ENCODE measurements at regions of chr19 and their contacts with region 1.

Region 1: GRCh38 chr19:6372594-6373095 is at the start of gene ALKBH7:
- DNase-seq: peak; percentile 99
- H3K4me3 Mint-ChIP-seq: peak within 1 kb of the TSS; percentile 92
- H3K27ac Mint-ChIP-seq: peak within 1 kb of the TSS; percentile 94
- H3K4me1 Mint-ChIP-seq: peaks cover 11% of the 10 kb centered on the region
- H3K27me3 Mint-ChIP-seq: no peaks in the 10 kb centered on the region
- total RNA-seq, gene ALKBH7: 23.9 and 25.0 TPM in 2 replicates

Region 2: DNA sequence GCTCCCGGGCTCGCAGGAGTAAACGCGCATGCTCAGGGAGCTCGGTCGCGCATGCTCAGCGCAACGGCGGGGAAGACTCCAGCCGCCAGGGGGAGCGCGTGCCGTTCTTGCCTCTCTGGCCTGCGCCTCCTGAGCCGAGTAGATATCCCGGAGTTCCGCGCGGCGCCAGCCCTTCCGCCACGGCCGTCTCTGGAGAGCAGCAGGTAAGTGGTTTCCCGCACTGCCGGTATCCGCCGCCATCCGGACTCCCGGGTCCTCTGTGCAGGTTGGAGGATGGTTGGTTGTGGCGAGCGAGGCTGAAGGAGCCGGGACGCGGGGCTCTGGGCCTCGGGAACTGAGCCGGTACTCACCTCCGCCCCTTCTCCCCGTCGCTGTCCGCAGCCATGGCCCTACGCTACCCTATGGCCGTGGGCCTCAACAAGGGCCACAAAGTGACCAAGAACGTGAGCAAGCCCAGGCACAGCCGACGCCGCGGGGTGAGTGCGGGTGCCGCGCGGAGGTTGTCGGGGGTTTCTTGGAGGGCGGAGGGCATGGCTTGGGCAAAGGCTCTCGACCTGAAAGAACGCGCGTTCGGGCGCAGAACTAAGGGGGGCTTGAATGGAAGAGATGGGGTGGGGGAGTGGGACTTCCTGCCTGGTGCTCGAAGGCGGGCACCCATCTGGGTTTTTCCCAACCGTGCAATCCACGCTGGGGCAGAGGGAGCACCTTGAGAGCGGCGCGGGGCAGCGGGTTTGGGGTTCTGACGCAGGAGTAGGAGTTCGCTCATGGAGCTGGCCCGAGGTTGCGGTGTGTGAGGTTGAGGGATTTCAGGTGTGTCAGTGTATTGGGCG is 682.3 kb before region 1 on chr19 and contains the start of gene RPL36:
- intact Hi-C with region 1: loop called (anchors 5 kb)
- DNase-seq: peak; percentile 100
- H3K4me3 Mint-ChIP-seq: peak within 1 kb of the TSS; percentile 100
- H3K27ac Mint-ChIP-seq: peak within 1 kb of the TSS; percentile 98
- H3K4me1 Mint-ChIP-seq: peaks cover 23% of the 10 kb centered on the region
- H3K27me3 Mint-ChIP-seq: no peaks in the 10 kb centered on the region
- total RNA-seq, gene RPL36: 1,117 and 1,132 TPM in 2 replicates

Region 3: GRCh38 chr19:6354098-6354674 is 18.5 kb before region 1 on chr19:
- intact Hi-C with region 1: no loop called
- DNase-seq: no peak
- H3K4me3 Mint-ChIP-seq: no peak overlapping the region
- H3K27ac Mint-ChIP-seq: no peak overlapping the region
- H3K4me1 Mint-ChIP-seq: no peaks in the 10 kb centered on the region
- H3K27me3 Mint-ChIP-seq: no peaks in the 10 kb centered on the region

Region 4: GRCh38 chr19:6393074-6393983 is 20.7 kb after region 1 on chr19 and contains the start of gene GTF2F1:
- intact Hi-C with region 1: loop called (anchors 1 kb)
- DNase-seq: peak; percentile 97
- H3K4me3 Mint-ChIP-seq: peak within 1 kb of the TSS; percentile 90
- H3K27ac Mint-ChIP-seq: peak within 1 kb of the TSS; percentile 95
- H3K4me1 Mint-ChIP-seq: peaks cover 18% of the 10 kb centered on the region
- H3K27me3 Mint-ChIP-seq: no peaks in the 10 kb centered on the region
- total RNA-seq, gene GTF2F1: 60.7 and 63.5 TPM in 2 replicates